ENCODE measurements at regions of chr9 and their contacts with region 1.

Region 1: DNA sequence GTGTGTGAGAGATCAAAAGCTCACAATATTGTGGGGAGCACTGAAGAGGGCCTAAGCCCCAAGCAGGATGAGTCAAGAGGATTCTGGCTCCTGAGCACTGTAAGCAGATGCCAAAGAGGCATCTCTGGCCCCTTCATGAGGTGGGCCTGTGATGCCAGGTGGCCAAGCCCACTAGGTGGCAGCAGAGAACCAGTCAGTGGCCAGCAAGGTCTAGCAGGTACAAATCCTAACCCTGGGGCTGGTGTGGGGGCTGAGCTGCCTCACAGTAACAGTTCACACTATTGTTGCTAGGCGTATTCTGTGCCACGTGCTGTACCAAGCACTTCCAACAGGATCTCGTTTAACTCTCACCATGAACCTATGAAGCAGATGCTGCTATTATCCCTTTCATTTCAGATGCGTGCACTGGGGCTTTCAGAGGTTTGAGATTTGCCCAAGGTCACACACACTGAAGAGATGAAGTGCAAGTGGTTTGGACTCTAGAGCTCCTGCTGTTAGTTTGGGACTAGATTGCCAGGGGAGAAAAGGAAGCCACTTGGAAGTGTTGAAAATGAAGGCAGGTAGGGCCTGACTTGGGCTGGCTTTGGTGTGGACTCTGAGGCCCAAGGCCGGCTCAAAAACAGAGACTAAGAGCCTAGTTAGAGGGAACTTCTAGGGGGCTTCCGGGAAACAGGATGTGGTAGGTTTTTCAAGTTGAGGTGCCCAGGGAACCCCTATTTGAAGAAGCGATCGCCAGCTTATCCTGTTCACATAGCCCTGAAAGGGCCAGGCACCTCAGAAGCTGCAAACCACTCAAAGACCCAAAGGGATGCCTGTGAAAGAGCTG is 4.4 kb upstream of the MLANA start:
- DNase-seq: peak; percentile 45 to 80 (median 64)
- ATAC-seq: peak; percentile 94
- H3K4me3 ChIP-seq: no peak overlapping the region
- H3K4me3 Mint-ChIP-seq: no peak overlapping the region
- H3K27ac ChIP-seq: no peak overlapping the region
- H3K27ac Mint-ChIP-seq: peak overlapping the region in 4 of 9 donors; percentile 11 to 64 (median 34)
- H3K4me1 ChIP-seq: peaks cover 0 to 3% of the 10 kb centered on the region in 2 donors
- H3K4me1 Mint-ChIP-seq: peaks cover 0 to 14% (median 7%) of the 10 kb centered on the region in 7 donors
- H3K27me3 ChIP-seq: no peaks in the 10 kb centered on the region
- H3K27me3 Mint-ChIP-seq: no peaks in the 10 kb centered on the region

Region 2: GRCh38 chr9:5714501-5715401 is 171.6 kb before region 1 on chr9:
- CTCF ChIA-PET with region 1: no interaction called
- POLR2A ChIA-PET with region 1: no interaction called
- intact Hi-C with region 1: no loop called
- DNase-seq: peak in 2 of 9 donors; percentile 1 to 7
- ATAC-seq: no peak
- H3K4me3 ChIP-seq: no peak overlapping the region
- H3K4me3 Mint-ChIP-seq: no peak overlapping the region
- H3K27ac ChIP-seq: no peak overlapping the region
- H3K27ac Mint-ChIP-seq: no peak overlapping the region
- H3K4me1 ChIP-seq: no peaks in the 10 kb centered on the region
- H3K4me1 Mint-ChIP-seq: peaks cover 0 to 17% (median 3%) of the 10 kb centered on the region in 7 donors
- H3K27me3 ChIP-seq: no peaks in the 10 kb centered on the region
- H3K27me3 Mint-ChIP-seq: no peaks in the 10 kb centered on the region

Region 3: GRCh38 chr9:6049798-6050197 is 163.5 kb after region 1 on chr9:
- CTCF ChIA-PET with region 1: interaction called, 28 read pairs
- POLR2A ChIA-PET with region 1: no interaction called
- intact Hi-C with region 1: loop called (anchors 1 kb)
- DNase-seq: peak in 3 of 9 donors; percentile 6 to 34 (median 11)
- ATAC-seq: peak; percentile 70
- H3K4me3 ChIP-seq: no peak overlapping the region
- H3K4me3 Mint-ChIP-seq: peak overlapping the region in 1 of 10 donors; percentile 5
- H3K27ac ChIP-seq: no peak overlapping the region
- H3K27ac Mint-ChIP-seq: no peak overlapping the region
- H3K4me1 ChIP-seq: no peaks in the 10 kb centered on the region
- H3K4me1 Mint-ChIP-seq: peaks cover 0 to 9% (median 5%) of the 10 kb centered on the region in 7 donors
- H3K27me3 ChIP-seq: no peaks in the 10 kb centered on the region
- H3K27me3 Mint-ChIP-seq: peaks cover 5 to 9% (median 6%) of the 10 kb centered on the region in 5 donors

Region 4: GRCh38 chr9:6305954-6306563 is 419.7 kb after region 1 on chr9:
- CTCF ChIA-PET with region 1: interaction called, 5 read pairs
- POLR2A ChIA-PET with region 1: no interaction called
- intact Hi-C with region 1: loop called (anchors 1 to 5 kb)
- DNase-seq: peak in 5 of 9 donors; percentile 4 to 19 (median 13)
- ATAC-seq: no peak
- H3K4me3 ChIP-seq: no peak overlapping the region
- H3K4me3 Mint-ChIP-seq: no peak overlapping the region
- H3K27ac ChIP-seq: no peak overlapping the region
- H3K27ac Mint-ChIP-seq: no peak overlapping the region
- H3K4me1 ChIP-seq: no peaks in the 10 kb centered on the region
- H3K4me1 Mint-ChIP-seq: no peaks in the 10 kb centered on the region
- H3K27me3 ChIP-seq: peaks cover 0 to 4% of the 10 kb centered on the region in 2 donors
- H3K27me3 Mint-ChIP-seq: peaks cover 5 to 22% (median 12%) of the 10 kb centered on the region in 5 donors